ENCODE measurements at regions of chr5 and their contacts with region 1.

Region 1: GRCh38 chr5:179870402-179870903 is 11.8 kb upstream of the MRNIP start:
- DNase-seq: peak; percentile 43 to 60
- H3K4me3 ChIP-seq: no peak overlapping the region
- H3K27ac ChIP-seq: no peak overlapping the region
- H3K4me1 ChIP-seq: no peaks in the 10 kb centered on the region; a peak in 1 of 7 replicates
- H3K27me3 ChIP-seq: no peaks in the 10 kb centered on the region
- CTCF ChIP-seq: peak in 2 of 3 experiments; percentile 62 to 80; a peak in 3 of 4 replicates
- EP300 ChIP-seq: no peak
- POLR2A ChIP-seq: no peak
- RAD21 ChIP-seq: peak; percentile 62 to 71

Region 2: GRCh38 chr5:179643556-179643955 is 226.9 kb before region 1 on chr5:
- CTCF ChIA-PET with region 1: no interaction called
- POLR2A ChIA-PET with region 1: no interaction called
- DNase-seq: no peak
- H3K4me3 ChIP-seq: no peak overlapping the region
- H3K27ac ChIP-seq: no peak overlapping the region
- H3K4me1 ChIP-seq: peaks cover 0 to 2% (median 0%) of the 10 kb centered on the region in 4 experiments; a peak in 1 of 7 replicates
- H3K27me3 ChIP-seq: no peaks in the 10 kb centered on the region
- CTCF ChIP-seq: no peak
- EP300 ChIP-seq: no peak
- POLR2A ChIP-seq: no peak
- RAD21 ChIP-seq: no peak

Region 3: DNA sequence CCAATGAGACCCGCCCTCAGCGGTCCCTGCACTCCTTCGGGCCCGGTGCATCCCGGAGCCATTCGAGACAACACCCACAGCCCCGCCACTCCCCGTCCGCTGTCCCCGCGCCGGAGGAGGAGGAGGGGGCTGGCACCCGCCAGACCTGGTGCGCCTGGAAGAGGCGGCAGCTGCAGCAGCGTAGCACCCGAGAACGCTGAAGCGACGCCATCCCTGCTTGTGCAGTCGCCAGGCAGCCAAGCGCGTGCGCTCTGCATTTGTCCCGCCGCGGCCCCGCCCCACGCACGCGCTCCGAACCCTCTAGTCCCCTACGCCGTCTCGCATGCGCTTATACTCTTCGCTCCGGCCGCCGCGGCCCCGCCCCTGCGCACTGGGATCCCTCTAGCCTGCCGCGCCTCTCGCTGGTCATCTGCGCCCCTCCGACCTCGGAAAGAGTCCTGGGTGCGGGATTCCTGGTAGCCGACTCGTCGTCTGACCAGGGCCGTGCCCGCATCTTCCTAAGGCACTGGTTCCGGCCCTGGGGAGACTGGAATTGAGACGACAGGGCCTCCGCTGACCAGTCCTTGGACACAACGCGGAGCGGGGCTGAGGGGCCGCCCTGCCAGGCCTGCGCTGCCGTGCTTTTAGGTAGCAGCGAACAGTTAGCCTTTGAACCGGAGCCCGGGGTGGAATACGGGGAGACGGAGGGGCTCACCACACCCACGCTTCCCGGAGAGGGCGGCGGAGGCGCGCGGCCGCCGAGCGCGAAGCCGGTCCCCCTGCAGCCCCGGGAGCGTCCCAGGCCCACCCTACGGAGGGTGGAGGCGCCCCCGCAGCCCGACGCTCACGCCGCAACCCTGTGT is 11.6 kb before region 1 on chr5 and contains the start of gene MRNIP:
- CTCF ChIA-PET with region 1: interaction called, 18 read pairs
- POLR2A ChIA-PET with region 1: interaction called, 8 read pairs
- DNase-seq: peak; percentile 74 to 93
- H3K4me3 ChIP-seq: peak within 1 kb of the TSS; percentile 76 to 90 (median 78)
- H3K27ac ChIP-seq: peak within 1 kb of the TSS; percentile 27; the same call in 1 of the 2 replicates
- H3K4me1 ChIP-seq: no peaks in the 10 kb centered on the region
- H3K27me3 ChIP-seq: peaks cover 0 to 2% (median 0%) of the 10 kb centered on the region in 4 experiments; a peak in 1 of 7 replicates
- CTCF ChIP-seq: no peak
- EP300 ChIP-seq: no peak
- POLR2A ChIP-seq: peak in 1 of 2 experiments; percentile 30; a peak in 1 of 3 replicates
- RAD21 ChIP-seq: peak in 1 of 2 experiments; percentile 25; a peak in 1 of 4 replicates
- total RNA-seq, gene MRNIP: 22.2 and 29.6 TPM in 2 replicates

Region 4: GRCh38 chr5:179893069-179893957 is 22.9 kb after region 1 on chr5:
- CTCF ChIA-PET with region 1: interaction called, 13 read pairs
- POLR2A ChIA-PET with region 1: interaction called, 3 read pairs
- DNase-seq: no peak
- H3K4me3 ChIP-seq: no peak overlapping the region
- H3K27ac ChIP-seq: no peak overlapping the region
- H3K4me1 ChIP-seq: peaks cover 0 to 3% (median 0%) of the 10 kb centered on the region in 4 experiments; a peak in 1 of 7 replicates
- H3K27me3 ChIP-seq: no peaks in the 10 kb centered on the region
- CTCF ChIP-seq: peak in 1 of 3 experiments; percentile 7; a peak in 1 of 4 replicates
- EP300 ChIP-seq: no peak
- POLR2A ChIP-seq: no peak
- RAD21 ChIP-seq: no peak

Region 5: DNA sequence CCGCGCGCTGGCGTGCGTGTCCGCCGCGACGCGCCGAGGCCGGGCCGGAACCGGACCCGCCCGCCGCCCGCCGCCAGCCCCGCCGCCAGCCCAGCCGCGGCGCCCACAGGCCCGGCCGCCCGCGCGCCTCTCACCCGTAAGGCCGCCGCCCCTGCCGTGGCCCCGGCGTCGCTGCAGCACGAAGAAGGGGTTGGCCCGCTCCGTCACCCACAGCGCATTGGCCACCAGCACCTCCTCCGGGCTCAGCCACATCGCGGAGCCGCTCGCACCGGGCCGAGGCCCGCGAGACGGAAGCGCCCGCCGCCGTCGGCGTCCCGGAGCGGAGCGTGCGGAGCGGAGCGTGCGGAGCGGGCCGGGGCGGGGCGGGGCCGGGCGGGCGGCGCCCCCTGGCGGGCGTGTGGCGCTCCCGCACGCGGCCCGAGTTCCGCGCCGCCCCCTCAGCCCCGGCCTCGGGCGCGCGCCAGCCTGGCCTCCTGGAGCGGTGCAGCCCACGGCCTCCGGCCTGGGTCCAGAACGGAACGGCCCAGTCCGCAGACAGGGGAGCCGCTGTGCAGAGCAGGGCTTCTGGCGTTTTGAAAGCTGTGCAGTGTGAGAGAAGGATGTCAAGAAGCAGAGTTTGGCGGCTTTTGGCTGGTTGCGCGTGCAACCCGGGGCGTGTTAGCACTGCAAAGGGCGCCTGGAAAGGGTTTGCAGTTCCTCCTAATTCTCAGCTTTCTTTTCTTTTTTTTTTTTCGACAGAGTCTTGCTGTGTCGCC is 37.3 kb after region 1 on chr5 and contains the start of gene TBC1D9B:
- CTCF ChIA-PET with region 1: interaction called, 24 read pairs
- POLR2A ChIA-PET with region 1: no interaction called
- DNase-seq: peak in 1 of 2 experiments; percentile 81
- H3K4me3 ChIP-seq: peak within 1 kb of the TSS; percentile 32 to 72 (median 54)
- H3K27ac ChIP-seq: no peak within 1 kb of the TSS
- H3K4me1 ChIP-seq: peaks cover 0 to 7% (median 4%) of the 10 kb centered on the region in 4 experiments; a peak in 5 of 7 replicates
- H3K27me3 ChIP-seq: peaks cover 0 to 6% (median 0%) of the 10 kb centered on the region in 4 experiments; a peak in 2 of 7 replicates
- CTCF ChIP-seq: peak in 2 of 3 experiments; percentile 24 to 28; a peak in 2 of 4 replicates
- EP300 ChIP-seq: no peak
- POLR2A ChIP-seq: peak in 1 of 2 experiments; percentile 43; a peak in 1 of 3 replicates
- RAD21 ChIP-seq: peak in 1 of 2 experiments; percentile 0; a peak in 2 of 4 replicates
- total RNA-seq, gene TBC1D9B: 49.9 and 57.1 TPM in 2 replicates

Measured in H1 (cell line).